Naive thymus-derived CD4-positive, alpha-beta T cell (primary cell): ENCODE measurements at regions of chr9 and their contacts with region 1.

Region 1: DNA sequence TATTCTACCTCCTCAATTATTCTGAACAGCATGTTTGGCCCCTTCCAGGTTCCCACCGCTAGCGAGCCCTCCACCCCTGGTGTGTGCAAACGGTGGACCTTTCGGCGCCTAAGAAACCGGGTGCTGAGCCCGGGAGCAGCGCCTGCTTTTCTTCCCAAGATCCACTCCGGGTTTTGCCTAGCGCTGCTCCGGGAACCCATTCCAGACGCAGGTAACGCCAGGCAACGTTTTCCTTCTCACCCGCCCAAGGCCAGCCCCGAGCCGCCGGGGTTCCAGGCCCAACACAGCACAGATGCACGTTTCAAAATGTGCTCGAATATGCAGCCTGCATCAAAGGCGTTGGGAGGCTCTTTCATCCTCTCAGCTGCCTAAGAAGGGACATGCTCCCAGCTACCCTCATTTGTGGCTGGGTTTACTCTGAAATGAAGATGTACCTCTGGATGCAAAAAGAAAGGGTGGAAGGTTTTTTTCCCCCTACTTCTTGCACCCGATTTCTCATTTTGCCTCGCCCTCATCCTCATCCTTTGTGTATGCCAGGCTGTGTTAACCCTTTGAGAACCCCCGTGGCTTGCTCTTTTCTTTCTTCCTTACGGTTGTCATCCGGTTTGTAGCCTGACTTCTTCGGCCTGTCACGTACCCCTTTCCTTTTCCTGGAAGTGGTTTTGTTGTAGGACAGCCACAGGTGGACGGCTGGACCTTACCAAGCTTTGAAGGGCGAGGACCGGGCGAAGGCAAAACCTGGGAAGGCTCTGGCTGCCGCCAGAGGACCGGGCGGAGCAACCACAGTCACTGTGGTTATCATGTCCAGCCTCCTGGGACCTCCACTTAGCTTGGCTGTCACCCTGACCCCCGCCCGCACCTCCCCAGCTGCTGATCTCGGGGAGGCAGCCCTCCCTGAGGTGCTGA is 226.9 kb downstream of the SMARCA2 start:
- DNase-seq: peak; percentile 20 to 77 (median 48)
- ATAC-seq: peak; percentile 89
- H3K4me3 ChIP-seq: peak overlapping the region; percentile 43
- H3K4me3 Mint-ChIP-seq: peak overlapping the region; percentile 69 to 90 (median 80)
- H3K27ac ChIP-seq: no peak overlapping the region
- H3K27ac Mint-ChIP-seq: peak overlapping the region in 4 of 9 donors; percentile 17 to 50 (median 31)
- H3K4me1 ChIP-seq: no peaks in the 10 kb centered on the region
- H3K4me1 Mint-ChIP-seq: peaks cover 10 to 17% (median 17%) of the 10 kb centered on the region in 7 donors
- H3K27me3 ChIP-seq: peaks cover 0 to 4% of the 10 kb centered on the region in 2 donors
- H3K27me3 Mint-ChIP-seq: peaks cover 13 to 31% (median 24%) of the 10 kb centered on the region in 5 donors

Region 2: GRCh38 chr9:1536522-1537170 is 705.4 kb before region 1 on chr9:
- CTCF ChIA-PET with region 1: no interaction called
- POLR2A ChIA-PET with region 1: no interaction called
- intact Hi-C with region 1: no loop called
- DNase-seq: no peak
- ATAC-seq: no peak
- H3K4me3 ChIP-seq: no peak overlapping the region
- H3K4me3 Mint-ChIP-seq: no peak overlapping the region
- H3K27ac ChIP-seq: no peak overlapping the region
- H3K27ac Mint-ChIP-seq: no peak overlapping the region
- H3K4me1 ChIP-seq: no peaks in the 10 kb centered on the region
- H3K4me1 Mint-ChIP-seq: peaks cover 0 to 6% (median 0%) of the 10 kb centered on the region in 7 donors
- H3K27me3 ChIP-seq: no peaks in the 10 kb centered on the region
- H3K27me3 Mint-ChIP-seq: peaks cover 0 to 13% (median 7%) of the 10 kb centered on the region in 5 donors

Region 3: DNA sequence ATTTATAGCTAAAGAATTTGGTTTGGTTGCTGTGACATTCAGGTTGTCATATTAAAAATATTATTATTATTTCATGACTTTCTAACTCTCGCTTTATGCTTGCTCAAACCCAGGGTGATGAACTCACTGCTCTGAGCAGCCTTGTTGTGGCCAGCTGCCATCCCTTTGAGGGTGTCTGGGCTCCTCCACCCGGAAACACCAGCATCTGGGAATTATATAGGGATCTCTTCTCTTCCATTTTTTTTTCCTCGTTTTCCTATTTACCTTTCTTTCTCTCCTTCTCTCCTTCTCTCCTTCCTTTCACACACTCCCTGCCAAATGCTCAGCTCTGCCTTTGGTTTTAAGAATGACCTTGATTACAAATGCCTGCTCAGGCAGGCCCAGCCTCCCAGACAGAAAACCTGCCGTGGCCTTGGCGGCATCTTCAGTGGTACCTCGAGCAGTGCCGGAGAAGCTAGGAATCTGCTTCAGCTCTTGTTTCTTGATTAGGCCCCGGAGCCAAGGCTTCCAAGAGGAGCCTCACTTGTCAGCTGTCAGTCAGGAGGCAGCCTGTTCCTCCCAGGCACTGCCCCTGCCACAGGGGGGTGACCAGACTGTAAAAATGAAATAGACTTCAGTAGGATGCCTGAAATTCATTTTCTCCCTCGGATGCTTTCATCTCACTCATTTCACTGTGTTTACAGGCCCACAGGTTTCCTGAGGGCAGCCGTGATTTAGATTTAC is 582.6 kb before region 1 on chr9:
- CTCF ChIA-PET with region 1: no interaction called
- POLR2A ChIA-PET with region 1: no interaction called
- intact Hi-C with region 1: no loop called
- DNase-seq: no peak
- ATAC-seq: no peak
- H3K4me3 ChIP-seq: no peak overlapping the region
- H3K4me3 Mint-ChIP-seq: no peak overlapping the region
- H3K27ac ChIP-seq: no peak overlapping the region
- H3K27ac Mint-ChIP-seq: no peak overlapping the region
- H3K4me1 ChIP-seq: no peaks in the 10 kb centered on the region
- H3K4me1 Mint-ChIP-seq: no peaks in the 10 kb centered on the region
- H3K27me3 ChIP-seq: no peaks in the 10 kb centered on the region
- H3K27me3 Mint-ChIP-seq: peaks cover 1 to 36% (median 5%) of the 10 kb centered on the region in 5 donors

Region 4: DNA sequence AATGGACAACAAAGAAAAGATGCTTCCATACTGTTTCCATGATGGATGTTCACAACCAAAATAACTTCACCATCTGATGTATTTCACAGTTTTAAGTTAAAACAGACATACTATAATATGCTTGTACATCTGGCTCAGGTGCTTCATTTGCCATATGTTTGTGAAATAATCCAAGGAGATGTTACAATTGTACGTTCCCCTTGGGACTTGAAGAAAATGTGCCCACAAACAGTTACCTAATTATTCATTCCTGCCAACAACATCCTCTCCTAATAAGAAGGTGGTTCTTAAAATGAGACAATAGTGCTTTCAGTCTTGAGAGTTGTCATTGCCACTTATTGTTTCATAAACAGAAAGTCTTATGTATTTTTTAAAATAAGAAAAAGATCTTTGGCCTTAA is 260.0 kb before region 1 on chr9:
- CTCF ChIA-PET with region 1: no interaction called
- POLR2A ChIA-PET with region 1: no interaction called
- intact Hi-C with region 1: no loop called
- DNase-seq: no peak
- ATAC-seq: no peak
- H3K4me3 ChIP-seq: no peak overlapping the region
- H3K4me3 Mint-ChIP-seq: no peak overlapping the region
- H3K27ac ChIP-seq: no peak overlapping the region
- H3K27ac Mint-ChIP-seq: no peak overlapping the region
- H3K4me1 ChIP-seq: no peaks in the 10 kb centered on the region
- H3K4me1 Mint-ChIP-seq: no peaks in the 10 kb centered on the region
- H3K27me3 ChIP-seq: no peaks in the 10 kb centered on the region
- H3K27me3 Mint-ChIP-seq: peaks cover 0 to 17% (median 7%) of the 10 kb centered on the region in 5 donors

Region 5: GRCh38 chr9:2837915-2838314 is 595.8 kb after region 1 on chr9:
- CTCF ChIA-PET with region 1: no interaction called
- POLR2A ChIA-PET with region 1: no interaction called
- intact Hi-C with region 1: loop called in 1 of 2 experiments (anchors 10 kb)
- DNase-seq: no peak
- ATAC-seq: no peak
- H3K4me3 ChIP-seq: no peak overlapping the region
- H3K4me3 Mint-ChIP-seq: no peak overlapping the region
- H3K27ac ChIP-seq: no peak overlapping the region
- H3K27ac Mint-ChIP-seq: peak overlapping the region in 2 of 9 donors; percentile 37 to 69
- H3K4me1 ChIP-seq: peaks cover 8 to 12% of the 10 kb centered on the region in 2 donors
- H3K4me1 Mint-ChIP-seq: peaks cover 9 to 27% (median 18%) of the 10 kb centered on the region in 7 donors
- H3K27me3 ChIP-seq: no peaks in the 10 kb centered on the region
- H3K27me3 Mint-ChIP-seq: no peaks in the 10 kb centered on the region